ENCODE measurements at regions of chr1 and their contacts with region 1.

Region 1: GRCh38 chr1:173824331-173825081 is at the starts of genes CENPL and DARS2:
- DNase-seq: peak; percentile 95 to 96
- ATAC-seq: peak; percentile 99
- H3K4me3 ChIP-seq: peak within 1 kb of the TSS; percentile 69 to 94 (median 76)
- H3K27ac ChIP-seq: peak within 1 kb of the TSS; percentile 95 to 99 (median 96)
- H3K4me1 ChIP-seq: peaks cover 13% of the 10 kb centered on the region in 2 donors
- H3K27me3 ChIP-seq: no peaks in the 10 kb centered on the region
- CTCF ChIP-seq: no peak
- POLR2A ChIP-seq: peak; percentile 31 to 62
- total RNA-seq, gene CENPL: 1.1 to 5.0 (median 3.4) TPM
- total RNA-seq, gene DARS2: 4.3 to 8.9 (median 8.2) TPM

Region 2: DNA sequence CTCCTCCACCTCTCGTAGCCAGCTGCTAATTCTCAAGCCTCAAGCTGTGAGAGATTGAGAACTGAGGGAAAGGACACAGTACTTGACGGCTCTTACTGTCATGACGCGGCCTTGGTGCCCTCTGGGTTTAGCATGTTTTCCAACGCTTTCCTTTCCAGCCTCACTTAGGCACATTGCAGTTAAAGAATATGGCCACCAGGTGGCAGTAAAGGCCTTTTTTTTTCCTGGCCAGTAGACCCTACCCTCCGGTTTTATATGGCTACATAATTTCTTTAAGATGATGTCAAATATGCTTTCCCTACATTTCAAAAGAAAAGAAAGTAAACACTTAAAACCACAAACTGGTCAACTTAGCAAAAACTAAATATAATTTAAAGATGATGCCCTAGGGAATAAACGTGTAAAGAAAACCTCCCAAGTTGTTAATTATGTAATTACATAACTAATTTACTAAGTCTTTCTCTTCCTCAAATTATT is 404.1 kb before region 1 on chr1:
- in situ Hi-C with region 1: loop called in 3 of 4 experiments (anchors 5 to 25 kb)
- intact Hi-C with region 1: no loop called
- DNase-seq: peak in 1 of 2 donors; percentile 40
- ATAC-seq: peak; percentile 76 to 87
- H3K4me3 ChIP-seq: peak overlapping the region in 1 of 4 donors; percentile 8
- H3K27ac ChIP-seq: no peak overlapping the region
- H3K4me1 ChIP-seq: peaks cover 2 to 3% of the 10 kb centered on the region in 2 donors
- H3K27me3 ChIP-seq: no peaks in the 10 kb centered on the region
- CTCF ChIP-seq: peak; percentile 77 to 87 (median 82)
- POLR2A ChIP-seq: no peak

Region 3: GRCh38 chr1:173714759-173715537 is 109.6 kb before region 1 on chr1 and contains the start of gene KLHL20:
- in situ Hi-C with region 1: no loop called
- intact Hi-C with region 1: loop called (anchors 1 kb)
- DNase-seq: peak; percentile 56 to 75
- ATAC-seq: peak; percentile 99
- H3K4me3 ChIP-seq: peak within 1 kb of the TSS; percentile 80 to 98 (median 84)
- H3K27ac ChIP-seq: peak within 1 kb of the TSS; percentile 80 to 92 (median 85)
- H3K4me1 ChIP-seq: peaks cover 22% of the 10 kb centered on the region in 2 donors
- H3K27me3 ChIP-seq: peaks cover 0 to 5% (median 0%) of the 10 kb centered on the region in 3 donors
- CTCF ChIP-seq: no peak
- POLR2A ChIP-seq: peak; percentile 55 to 61
- total RNA-seq, gene KLHL20: 15.9 to 23.9 (median 23.4) TPM

Region 4: DNA sequence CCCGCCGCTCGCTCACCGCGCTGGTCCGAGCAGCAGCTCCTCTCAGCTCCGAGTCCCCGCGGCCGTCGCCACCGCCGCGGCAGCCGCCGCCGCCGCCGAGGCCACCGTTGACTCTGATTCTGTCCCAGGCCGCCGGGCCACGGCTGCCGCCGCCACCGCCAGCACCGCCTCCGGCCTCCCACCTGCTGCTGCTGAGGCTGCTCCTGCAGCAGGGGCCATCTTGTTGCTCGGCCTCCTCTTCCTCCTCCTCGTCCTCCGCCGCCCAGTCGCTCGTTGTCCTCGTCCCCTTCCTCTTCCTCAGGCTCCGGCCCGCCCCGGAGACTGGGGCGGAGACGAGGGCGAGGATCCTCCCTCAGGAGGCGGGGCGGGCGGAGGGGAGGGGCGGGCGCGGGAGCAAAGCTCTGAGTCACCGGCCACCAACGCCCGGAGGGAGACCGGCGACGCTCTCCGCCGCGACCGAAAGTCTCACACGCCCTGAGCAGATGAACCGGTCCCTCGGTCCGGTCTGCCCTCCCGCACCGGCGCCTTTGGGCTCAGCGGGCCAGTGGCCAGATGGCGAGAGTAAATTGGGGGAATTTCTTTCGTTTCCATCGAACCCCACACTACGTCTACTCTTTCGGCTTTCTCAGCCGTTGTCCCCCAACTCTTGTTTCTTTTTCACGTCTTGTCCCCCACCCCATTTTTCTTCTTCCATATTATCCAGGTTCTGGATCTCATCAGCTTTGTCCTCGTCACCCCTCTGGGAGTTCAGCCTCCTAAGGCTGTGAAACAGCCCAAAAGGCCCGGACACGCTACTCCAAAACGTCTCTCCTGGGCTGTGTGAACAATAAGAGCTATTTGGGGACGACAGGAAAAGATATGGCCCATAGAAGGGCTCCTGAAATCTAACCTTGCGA is 197.8 kb after region 1 on chr1 and contains the start of gene RC3H1:
- in situ Hi-C with region 1: no loop called
- intact Hi-C with region 1: loop called (anchors 1 kb)
- DNase-seq: peak; percentile 89 to 90
- ATAC-seq: peak; percentile 81 to 89
- H3K4me3 ChIP-seq: peak within 1 kb of the TSS; percentile 73 to 88 (median 82)
- H3K27ac ChIP-seq: peak within 1 kb of the TSS; percentile 94 to 98 (median 95)
- H3K4me1 ChIP-seq: peaks cover 29 to 44% of the 10 kb centered on the region in 2 donors
- H3K27me3 ChIP-seq: no peaks in the 10 kb centered on the region
- CTCF ChIP-seq: no peak
- POLR2A ChIP-seq: peak; percentile 91 to 94
- total RNA-seq, gene RC3H1: 17.6 to 88.9 (median 37.8) TPM

Region 5: DNA sequence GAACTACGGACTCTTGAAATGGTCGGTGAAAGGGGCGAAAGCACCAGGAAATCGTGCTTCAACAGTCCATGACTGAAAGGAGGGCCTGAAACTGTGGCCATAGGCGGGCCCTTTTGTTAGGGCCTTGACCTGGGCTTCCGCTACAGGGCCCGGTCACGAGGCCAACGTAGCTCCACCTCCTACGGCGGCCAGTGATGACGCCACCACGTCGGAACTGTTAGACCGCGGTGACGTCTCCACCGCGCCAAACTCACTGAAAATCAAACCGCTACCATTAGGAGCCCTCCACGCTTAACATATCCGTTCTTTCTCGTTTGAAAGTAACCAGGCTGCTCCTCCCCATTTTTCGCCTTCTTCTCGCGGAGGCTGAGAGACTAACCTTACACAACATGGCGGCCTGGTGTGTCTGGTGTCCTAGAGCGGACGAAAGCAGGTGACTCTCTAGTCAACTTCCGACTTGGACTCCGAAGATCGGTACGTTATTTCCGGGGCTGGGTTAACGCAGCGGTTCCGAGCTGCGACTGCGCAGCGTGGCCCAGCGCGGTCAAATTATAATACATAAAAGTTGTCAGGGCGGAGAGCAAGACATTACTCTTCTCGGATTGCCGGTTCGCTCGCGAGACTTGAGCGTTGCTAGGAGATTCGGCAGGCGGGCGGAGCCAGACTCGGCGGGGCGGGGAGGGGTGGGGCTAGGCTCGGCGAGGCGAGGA is 1174.9 kb after region 1 on chr1:
- in situ Hi-C with region 1: no loop called
- intact Hi-C with region 1: loop called (anchors 10 kb)
- DNase-seq: peak; percentile 96 to 98
- ATAC-seq: peak; percentile 93 to 98
- H3K4me3 ChIP-seq: peak overlapping the region; percentile 72 to 83 (median 74)
- H3K27ac ChIP-seq: peak overlapping the region; percentile 94 to 97 (median 96)
- H3K4me1 ChIP-seq: peaks cover 17 to 24% of the 10 kb centered on the region in 2 donors
- H3K27me3 ChIP-seq: no peaks in the 10 kb centered on the region
- CTCF ChIP-seq: no peak
- POLR2A ChIP-seq: peak; percentile 86 to 91

Measured in gastrocnemius medialis (tissue), 4 donors.